PC-3 (cell line): ENCODE measurements at regions of chr15 and their contacts with region 1.

Region 1: DNA sequence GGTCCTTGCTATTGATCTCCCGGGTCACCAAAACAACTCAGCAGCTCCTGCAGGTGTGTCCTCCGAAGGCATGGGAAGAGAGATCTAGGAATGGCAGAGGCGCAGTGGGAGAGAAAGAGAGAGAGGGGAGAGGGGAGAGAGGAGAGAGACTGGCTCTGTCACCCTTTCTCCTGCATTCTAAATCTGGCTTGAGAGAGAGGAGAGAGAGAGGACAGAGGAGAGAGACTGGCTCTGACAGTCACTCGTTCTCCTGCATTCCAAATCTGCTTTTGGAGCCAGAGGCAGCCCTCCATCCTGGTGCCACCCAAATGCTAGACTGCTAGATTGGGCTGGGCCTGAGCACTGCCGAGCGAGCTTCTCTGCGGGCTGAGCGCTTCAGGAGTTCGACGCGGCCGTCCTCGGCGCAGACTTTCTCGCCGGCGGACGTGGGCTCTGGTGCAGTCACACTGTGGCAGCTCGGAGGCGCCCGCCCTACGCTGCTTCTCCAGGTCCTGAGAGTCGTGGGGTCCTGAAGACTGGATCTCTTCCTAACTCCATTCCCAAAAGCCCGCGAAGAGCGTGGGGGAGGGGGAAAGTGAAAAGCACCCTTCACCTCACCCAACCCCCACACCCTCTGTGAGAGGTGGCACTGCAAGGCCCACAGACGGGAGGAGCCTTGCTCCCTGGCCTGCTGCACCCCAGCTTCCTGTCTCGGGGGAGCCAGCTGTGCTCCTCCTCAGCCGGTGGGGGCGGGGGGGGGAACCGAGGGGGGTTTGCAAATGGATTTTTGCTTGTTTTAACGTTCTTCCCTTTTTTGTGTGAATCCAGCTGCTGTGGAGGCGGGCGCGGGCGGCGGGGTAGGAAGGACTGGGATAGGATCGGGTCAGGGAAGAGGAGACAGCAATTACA is 222.3 kb downstream of the MEIS2 start:
- DNase-seq: no peak
- ATAC-seq: no peak
- H3K4me3 ChIP-seq: no peak overlapping the region
- H3K27ac ChIP-seq: no peak overlapping the region
- H3K4me1 ChIP-seq: peaks cover 5% of the 10 kb centered on the region; the same call in 1 of the 2 replicates
- H3K27me3 ChIP-seq: peaks cover 12% of the 10 kb centered on the region
- CTCF ChIP-seq: no peak

Region 2: GRCh38 chr15:36742696-36743095 is 135.3 kb before region 1 on chr15:
- CTCF ChIA-PET with region 1: no interaction called
- POLR2A ChIA-PET with region 1: no interaction called
- intact Hi-C with region 1: loop called (anchors 5 kb)
- DNase-seq: peak; percentile 84
- ATAC-seq: peak; percentile 88
- H3K4me3 ChIP-seq: no peak overlapping the region
- H3K27ac ChIP-seq: no peak overlapping the region
- H3K4me1 ChIP-seq: peaks cover 36% of the 10 kb centered on the region
- H3K27me3 ChIP-seq: no peaks in the 10 kb centered on the region
- CTCF ChIP-seq: no peak

Region 3: DNA sequence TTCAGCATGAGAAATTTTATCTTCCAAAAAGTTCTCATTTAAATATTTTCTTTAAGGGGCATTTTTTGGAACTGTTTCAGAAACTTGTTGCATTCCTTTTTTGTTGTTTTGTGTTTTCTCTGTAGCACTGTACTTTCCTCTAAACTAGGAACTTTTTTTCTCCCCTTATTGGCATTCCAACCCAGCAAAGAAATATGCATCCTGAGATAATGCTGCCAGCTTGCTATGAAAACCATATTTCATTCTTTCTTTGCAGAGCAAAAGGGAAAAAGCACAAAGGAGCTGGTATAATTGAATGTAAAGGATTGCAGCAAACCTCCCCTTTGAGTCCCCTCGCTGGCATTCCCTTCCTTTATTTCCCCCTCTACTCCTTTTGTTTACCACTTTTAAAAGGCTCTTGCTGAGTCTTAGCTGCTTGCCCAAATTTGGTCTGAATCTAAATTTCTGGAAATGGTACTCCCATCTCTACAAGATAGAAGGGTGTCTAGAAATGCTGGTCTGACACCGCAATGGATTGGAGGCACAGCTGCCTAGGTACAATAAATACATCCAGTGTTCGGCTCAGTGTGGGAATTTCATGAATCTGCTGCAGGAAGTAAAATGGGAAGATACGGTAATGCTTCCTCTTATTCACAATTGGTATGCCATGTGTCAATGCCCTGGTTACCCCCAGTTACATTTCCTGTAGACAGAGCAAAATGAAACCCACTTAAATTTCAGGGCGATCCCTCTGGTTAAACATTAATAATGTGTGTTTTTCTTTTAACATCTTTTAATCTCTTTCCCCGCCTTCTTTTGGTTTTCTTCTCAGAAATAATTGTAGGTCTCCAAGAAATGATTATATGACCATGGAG is 65.7 kb after region 1 on chr15:
- CTCF ChIA-PET with region 1: no interaction called
- POLR2A ChIA-PET with region 1: no interaction called
- intact Hi-C with region 1: no loop called
- DNase-seq: no peak
- ATAC-seq: no peak
- H3K4me3 ChIP-seq: no peak overlapping the region
- H3K27ac ChIP-seq: no peak overlapping the region
- H3K4me1 ChIP-seq: no peaks in the 10 kb centered on the region
- H3K27me3 ChIP-seq: no peaks in the 10 kb centered on the region
- CTCF ChIP-seq: no peak

Region 4: DNA sequence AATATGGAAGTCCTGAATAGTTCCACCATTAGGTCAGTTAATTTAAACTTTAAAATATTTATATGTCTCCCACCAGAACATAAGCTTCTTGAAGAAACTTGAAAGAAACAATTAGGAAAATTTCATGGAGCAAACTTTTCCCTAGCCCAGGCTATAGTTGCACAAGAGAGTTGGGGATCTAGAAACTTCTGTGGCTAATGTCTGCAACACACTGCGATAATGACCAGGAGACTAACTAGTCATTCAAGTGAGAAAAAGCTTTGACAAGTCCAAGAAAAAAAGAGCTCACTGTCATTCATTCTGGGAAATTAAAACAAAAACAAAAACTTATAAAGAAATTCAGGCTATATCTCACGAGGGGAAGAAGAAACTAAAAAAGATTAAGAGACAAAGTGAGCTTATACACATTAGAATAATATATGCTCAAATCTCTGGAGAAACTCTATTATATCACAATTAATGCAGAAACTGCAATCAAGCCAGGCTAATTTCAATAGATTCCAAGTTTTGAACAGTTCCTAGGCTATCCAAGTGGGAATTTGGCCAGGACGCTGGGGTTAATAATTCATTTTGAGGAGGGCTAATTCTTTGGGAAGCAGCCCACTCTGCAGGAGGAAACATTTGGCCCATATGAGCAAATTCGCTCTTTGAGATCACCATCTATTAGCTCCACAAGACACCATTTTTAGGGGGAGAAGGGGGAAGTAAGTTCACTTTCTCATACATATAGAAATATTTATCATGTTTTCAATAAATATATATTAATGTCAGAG is 87.7 kb after region 1 on chr15:
- CTCF ChIA-PET with region 1: no interaction called
- POLR2A ChIA-PET with region 1: no interaction called
- intact Hi-C with region 1: no loop called
- DNase-seq: no peak
- ATAC-seq: no peak
- H3K4me3 ChIP-seq: no peak overlapping the region
- H3K27ac ChIP-seq: no peak overlapping the region
- H3K4me1 ChIP-seq: no peaks in the 10 kb centered on the region
- H3K27me3 ChIP-seq: no peaks in the 10 kb centered on the region
- CTCF ChIP-seq: no peak